Activated naive CD8-positive, alpha-beta T cell treated with anti-CD3 and anti-CD28 coated beads, Interleukin-2, amount 10 ng/mL, durations not matched to agents 7 days and 5 days (primary cell): ENCODE measurements at regions of chr12 and their contacts with region 1.

Region 1: GRCh38 chr12:47779301-47779942 is 6.4 kb downstream of the SLC48A1 start:
- DNase-seq: peak; percentile 96
- ATAC-seq: peak; percentile 81
- H3K4me3 Mint-ChIP-seq: no peak overlapping the region
- H3K27ac Mint-ChIP-seq: peak overlapping the region; percentile 59
- H3K4me1 Mint-ChIP-seq: peaks cover 30% of the 10 kb centered on the region
- H3K27me3 Mint-ChIP-seq: no peaks in the 10 kb centered on the region

Region 2: GRCh38 chr12:47797441-47797840 is 18.0 kb after region 1 on chr12:
- POLR2A ChIA-PET with region 1: interaction called, 13 read pairs
- DNase-seq: peak; percentile 61
- ATAC-seq: peak; percentile 71
- H3K4me3 Mint-ChIP-seq: no peak overlapping the region
- H3K27ac Mint-ChIP-seq: peak overlapping the region; percentile 88
- H3K4me1 Mint-ChIP-seq: peaks cover 36% of the 10 kb centered on the region
- H3K27me3 Mint-ChIP-seq: no peaks in the 10 kb centered on the region

Region 3: GRCh38 chr12:47828608-47829536 is 49.5 kb after region 1 on chr12:
- POLR2A ChIA-PET with region 1: interaction called, 18 read pairs
- DNase-seq: no peak
- ATAC-seq: no peak
- H3K4me3 Mint-ChIP-seq: peak overlapping the region; percentile 23
- H3K27ac Mint-ChIP-seq: peak overlapping the region; percentile 82
- H3K4me1 Mint-ChIP-seq: peaks cover 72% of the 10 kb centered on the region
- H3K27me3 Mint-ChIP-seq: no peaks in the 10 kb centered on the region

Region 4: DNA sequence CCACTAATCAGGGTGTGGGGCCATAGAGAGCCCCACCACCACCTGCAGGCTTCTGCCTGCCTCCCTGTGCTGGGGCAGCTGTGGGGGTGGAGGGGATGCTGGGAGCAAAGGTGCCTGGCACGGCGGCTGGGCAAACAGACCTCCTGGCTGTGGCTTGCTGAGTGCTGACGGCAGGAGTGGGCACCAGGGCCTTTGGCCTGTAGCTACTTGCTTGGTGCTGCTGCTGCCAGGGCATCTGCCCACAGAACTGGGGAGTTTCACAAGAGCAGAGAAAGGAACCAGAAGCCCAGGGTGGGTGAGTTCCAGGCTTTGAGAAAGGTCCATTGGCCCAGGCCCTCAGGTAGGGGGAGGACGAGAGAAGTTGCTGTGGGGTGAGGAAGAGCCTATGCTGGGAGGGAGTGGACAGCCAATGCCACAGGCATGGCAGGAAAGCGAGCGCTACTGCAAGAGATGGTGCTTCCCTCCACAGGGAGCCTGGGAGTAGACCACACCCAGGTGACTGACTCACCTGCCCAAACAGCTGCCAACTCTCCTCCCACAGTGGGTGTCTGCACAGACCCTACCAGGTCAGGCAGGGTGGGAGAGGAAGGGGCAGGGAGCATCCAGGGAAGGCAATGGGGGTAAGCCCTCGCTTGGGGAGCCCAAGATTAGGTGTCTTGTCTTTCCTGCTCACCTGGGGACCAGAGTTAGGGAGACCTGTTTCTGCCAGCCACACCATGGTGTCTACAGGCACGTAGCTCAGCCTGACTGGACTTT is 79.3 kb after region 1 on chr12:
- POLR2A ChIA-PET with region 1: no interaction called
- DNase-seq: no peak
- ATAC-seq: no peak
- H3K4me3 Mint-ChIP-seq: no peak overlapping the region
- H3K27ac Mint-ChIP-seq: no peak overlapping the region
- H3K4me1 Mint-ChIP-seq: peaks cover 20% of the 10 kb centered on the region
- H3K27me3 Mint-ChIP-seq: no peaks in the 10 kb centered on the region